Mucosa of descending colon (tissue), 3 donors: ENCODE measurements at regions of chr18 and their contacts with region 1.

Region 1: GRCh38 chr18:3281456-3282400 is 19.8 kb downstream of the MYL12B start:
- DNase-seq: peak in 1 of 3 donors; percentile 44
- ATAC-seq: peak; percentile 76
- H3K4me3 ChIP-seq: no peak overlapping the region
- H3K4me1 ChIP-seq: no peaks in the 10 kb centered on the region
- CTCF ChIP-seq: no peak

Region 2: DNA sequence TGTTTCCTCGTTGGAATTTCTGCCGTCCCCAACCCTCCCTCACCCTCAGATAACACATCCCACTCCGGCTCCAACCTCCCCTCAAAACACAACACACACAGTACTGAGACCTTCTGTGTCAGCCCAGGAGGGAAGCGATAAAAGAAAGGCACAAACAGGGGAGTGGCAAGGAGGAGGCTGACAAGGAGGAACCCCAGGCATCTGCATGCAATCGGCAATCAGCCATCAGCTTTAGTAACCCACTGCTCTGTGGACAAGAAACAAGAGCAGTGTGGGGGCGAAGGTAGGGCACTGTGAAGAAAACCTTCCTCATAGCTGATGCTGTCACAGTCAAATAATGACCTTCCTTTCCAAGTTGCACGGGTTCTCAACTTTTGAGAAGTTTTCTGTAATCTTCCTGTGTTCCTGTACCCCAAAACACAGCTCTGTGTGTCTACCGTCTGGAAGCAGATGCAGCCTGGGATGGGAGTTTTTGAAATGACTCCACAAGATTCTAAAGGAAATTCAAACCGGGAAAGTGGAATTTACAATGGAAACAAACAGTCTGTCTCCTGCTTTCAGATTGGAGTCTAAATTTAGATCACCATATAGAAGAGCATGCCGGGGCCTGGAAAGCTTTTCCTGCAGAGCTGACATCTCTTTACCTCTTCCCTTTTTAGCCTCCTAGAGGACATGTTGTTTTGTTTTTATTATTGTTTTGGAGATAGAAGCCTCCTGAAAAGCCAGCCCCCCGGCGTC is 252.3 kb before region 1 on chr18:
- intact Hi-C with region 1: no loop called
- DNase-seq: no peak
- ATAC-seq: peak; percentile 67
- H3K4me3 ChIP-seq: no peak overlapping the region
- H3K4me1 ChIP-seq: peaks cover 12% of the 10 kb centered on the region
- CTCF ChIP-seq: no peak

Region 3: DNA sequence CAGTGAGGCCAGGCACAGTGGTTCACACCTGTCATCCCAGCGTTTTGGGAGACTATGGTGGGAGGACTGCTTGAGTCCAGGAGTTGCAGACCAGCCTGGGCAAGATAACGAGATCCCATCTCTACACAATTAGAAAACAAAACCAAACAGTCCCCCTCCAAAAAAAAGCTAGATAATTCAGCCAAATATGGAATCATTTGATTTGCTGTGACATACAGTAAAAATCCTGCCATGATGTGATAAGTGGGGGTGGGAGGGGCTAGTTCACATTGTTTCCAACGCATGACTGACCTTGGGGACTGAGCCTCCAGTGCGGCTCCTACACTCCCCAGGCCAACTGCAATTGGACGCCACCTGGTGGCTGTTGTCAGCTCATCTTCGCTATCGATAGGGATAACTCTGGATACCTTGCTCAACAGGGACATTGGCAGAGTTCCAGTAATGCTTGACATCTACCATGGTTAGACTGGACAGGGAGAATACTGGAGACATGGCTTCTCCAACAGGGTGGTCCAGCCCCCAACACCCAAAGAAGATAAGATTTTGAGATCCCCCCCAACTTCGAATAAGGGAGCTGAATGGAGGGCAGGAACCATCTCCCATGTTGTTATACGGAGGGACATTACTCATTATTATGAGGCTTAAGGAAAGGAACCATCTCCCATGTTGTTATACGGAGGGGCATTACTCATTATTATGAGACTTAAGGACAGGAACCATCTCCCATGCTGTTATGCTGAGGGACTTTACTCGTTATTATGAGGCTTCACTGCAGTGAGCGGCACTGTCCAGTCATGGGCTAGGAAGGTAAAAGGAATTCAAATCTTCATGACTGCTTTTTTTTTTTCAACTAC is 304.2 kb after region 1 on chr18:
- intact Hi-C with region 1: loop called in 1 of 2 experiments (anchors 10 kb)
- DNase-seq: peak; percentile 86 to 95 (median 90)
- ATAC-seq: peak; percentile 94
- H3K4me3 ChIP-seq: no peak overlapping the region
- H3K4me1 ChIP-seq: peaks cover 10% of the 10 kb centered on the region
- CTCF ChIP-seq: peak; percentile 57